Heart right ventricle (tissue), 16 donors: ENCODE measurements at regions of chrX and their contacts with region 1.

Region 1: DNA sequence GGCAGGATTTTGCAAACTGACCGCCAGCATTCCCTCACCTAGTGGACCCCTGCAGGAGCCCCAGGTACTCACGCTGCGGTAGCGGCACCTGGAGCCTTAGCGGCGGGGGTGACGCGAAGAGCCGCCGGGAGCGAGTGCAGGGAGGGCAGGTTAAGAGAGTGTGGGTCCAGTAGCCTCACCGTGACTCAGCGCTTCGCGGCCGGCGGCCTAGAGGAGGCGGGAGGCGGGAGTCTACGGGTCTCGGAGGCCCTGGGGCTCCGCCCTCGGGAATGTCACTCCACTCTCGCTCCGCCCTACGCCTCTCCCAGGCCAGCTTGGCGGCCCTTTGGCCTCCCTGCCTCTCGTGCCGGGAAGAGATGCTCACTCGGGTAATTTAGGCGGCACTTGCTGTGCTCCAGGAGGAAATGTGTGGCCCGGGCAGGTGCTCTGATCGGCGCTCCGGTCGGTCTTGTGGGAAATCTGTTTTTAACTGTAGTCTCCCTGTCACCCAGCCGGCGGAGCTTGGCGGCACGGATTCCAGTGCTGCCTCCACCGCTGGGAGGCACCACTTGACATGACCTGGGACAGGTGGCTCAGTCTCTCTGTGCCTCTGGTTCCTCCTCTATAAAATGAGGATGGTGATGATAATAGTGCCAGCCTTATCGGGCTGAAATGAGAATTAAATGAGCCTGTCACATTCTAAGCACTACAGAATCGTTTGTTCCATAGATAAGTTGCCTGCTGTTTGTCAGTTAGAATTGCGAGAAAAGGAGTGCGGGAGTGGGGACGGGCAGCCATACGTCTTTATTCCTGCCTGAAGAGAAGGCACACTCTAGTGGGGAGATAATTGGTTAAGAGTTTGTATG is at the start of gene PIR:
- DNase-seq: peak; percentile 81 to 87
- ATAC-seq: peak; percentile 98 to 100 (median 100)
- H3K4me3 ChIP-seq: peak within 1 kb of the TSS; percentile 48 to 72 (median 62)
- H3K27ac ChIP-seq: peak within 1 kb of the TSS in 9 of 10 donors; percentile 50 to 87 (median 79)
- H3K4me1 ChIP-seq: peaks cover 0 to 16% (median 3%) of the 10 kb centered on the region in 9 donors
- H3K27me3 ChIP-seq: peaks cover 0 to 78% (median 0%) of the 10 kb centered on the region in 7 donors
- CTCF ChIP-seq: peak in 6 of 9 donors; percentile 23 to 59 (median 45)
- total RNA-seq, gene PIR: 4.9 to 17.8 (median 9.4) TPM

Region 2: GRCh38 chrX:15564981-15565579 is 71.7 kb after region 1 on chrX:
- intact Hi-C with region 1: loop called in 6 of 10 experiments (anchors 1 to 10 kb)
- DNase-seq: peak; percentile 29 to 41
- ATAC-seq: peak; percentile 70 to 92 (median 82)
- H3K4me3 ChIP-seq: no peak overlapping the region
- H3K27ac ChIP-seq: no peak overlapping the region
- H3K4me1 ChIP-seq: peaks cover 0 to 8% (median 0%) of the 10 kb centered on the region in 9 donors
- H3K27me3 ChIP-seq: peaks cover 0 to 85% (median 0%) of the 10 kb centered on the region in 7 donors
- CTCF ChIP-seq: peak in 8 of 9 donors; percentile 18 to 68 (median 58)

Region 3: DNA sequence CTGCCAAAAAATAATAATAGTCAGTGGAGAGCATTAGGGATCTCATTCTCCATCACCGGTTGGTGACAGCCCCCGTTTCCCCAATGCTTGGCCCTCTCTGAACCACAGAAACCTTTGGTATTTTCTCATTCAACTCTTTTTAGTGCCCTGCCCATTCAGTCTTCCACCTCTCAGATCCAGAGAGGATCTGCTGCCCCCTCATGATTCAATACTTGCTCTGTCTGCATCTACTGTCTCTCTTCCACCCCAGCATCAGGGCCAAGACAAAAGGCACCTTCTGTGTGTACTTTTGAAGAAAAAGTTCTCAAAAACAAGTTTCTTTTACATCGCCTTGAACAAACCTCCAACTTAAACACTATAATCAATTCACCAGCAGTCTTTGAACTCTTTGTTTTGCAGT is 151.9 kb after region 1 on chrX:
- intact Hi-C with region 1: loop called in 2 of 10 experiments (anchors 10 kb)
- DNase-seq: no peak
- ATAC-seq: no peak
- H3K4me3 ChIP-seq: no peak overlapping the region
- H3K27ac ChIP-seq: no peak overlapping the region
- H3K4me1 ChIP-seq: no peaks in the 10 kb centered on the region
- H3K27me3 ChIP-seq: peaks cover 0 to 73% (median 0%) of the 10 kb centered on the region in 7 donors
- CTCF ChIP-seq: no peak

Region 4: GRCh38 chrX:15664487-15665444 is 171.4 kb after region 1 on chrX and contains the start of gene CLTRN:
- intact Hi-C with region 1: loop called in 1 of 10 experiments (anchors 10 kb)
- DNase-seq: no peak
- ATAC-seq: no peak
- H3K4me3 ChIP-seq: no peak within 1 kb of the TSS
- H3K27ac ChIP-seq: no peak within 1 kb of the TSS
- H3K4me1 ChIP-seq: no peaks in the 10 kb centered on the region
- H3K27me3 ChIP-seq: peaks cover 0 to 97% (median 0%) of the 10 kb centered on the region in 7 donors
- CTCF ChIP-seq: no peak
- total RNA-seq, gene CLTRN: 0.17 to 1.4 (median 0.86) TPM

Region 5: DNA sequence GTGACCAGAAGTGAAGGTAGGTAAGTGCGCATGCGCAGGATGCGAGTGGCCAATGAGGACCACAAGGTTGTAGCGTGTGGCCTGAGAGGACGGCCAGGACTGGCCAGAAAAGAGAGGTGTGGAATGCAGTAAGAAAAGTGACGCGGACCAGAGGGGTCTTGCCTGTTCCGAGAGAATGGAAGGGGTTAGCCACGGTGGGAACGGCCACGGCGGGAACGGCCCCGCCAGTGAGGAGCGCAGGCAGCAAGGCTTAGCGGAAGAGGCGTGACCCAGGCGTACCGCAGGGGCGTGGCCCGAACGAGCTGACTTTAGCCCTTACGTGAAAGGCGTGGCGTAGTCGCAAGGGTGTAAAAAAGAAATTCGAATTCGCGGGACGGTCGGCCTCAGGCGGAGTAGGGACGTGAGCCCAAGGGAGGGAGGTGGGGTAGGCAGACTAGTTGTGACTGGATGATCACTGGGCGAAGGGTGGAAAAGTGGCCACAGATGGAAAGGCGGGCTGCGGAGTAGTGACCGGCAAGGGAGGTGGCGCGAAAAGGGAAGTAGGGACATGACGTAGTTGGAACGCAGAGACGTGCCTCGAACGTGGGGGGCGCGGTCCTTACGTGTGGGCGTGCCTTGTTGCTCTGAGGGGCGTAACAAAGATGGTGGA is 181.6 kb after region 1 on chrX:
- intact Hi-C with region 1: loop called in 1 of 10 experiments (anchors 10 kb)
- DNase-seq: peak; percentile 87 to 91
- ATAC-seq: peak; percentile 94 to 98 (median 96)
- H3K4me3 ChIP-seq: peak overlapping the region; percentile 54 to 84 (median 77)
- H3K27ac ChIP-seq: peak overlapping the region; percentile 86 to 99 (median 98)
- H3K4me1 ChIP-seq: peaks cover 0 to 32% (median 14%) of the 10 kb centered on the region in 9 donors
- H3K27me3 ChIP-seq: peaks cover 0 to 19% (median 0%) of the 10 kb centered on the region in 7 donors
- CTCF ChIP-seq: no peak

Region 6: GRCh38 chrX:17441965-17442364 is 1948.6 kb after region 1 on chrX:
- intact Hi-C with region 1: loop called in 1 of 10 experiments (anchors 5 kb)
- DNase-seq: no peak
- ATAC-seq: no peak
- H3K4me3 ChIP-seq: no peak overlapping the region
- H3K27ac ChIP-seq: no peak overlapping the region
- H3K4me1 ChIP-seq: no peaks in the 10 kb centered on the region
- H3K27me3 ChIP-seq: peaks cover 0 to 35% (median 0%) of the 10 kb centered on the region in 7 donors
- CTCF ChIP-seq: no peak